MCF 10A (cell line): ENCODE measurements at regions of chr10 and their contacts with region 1.

Region 1: DNA sequence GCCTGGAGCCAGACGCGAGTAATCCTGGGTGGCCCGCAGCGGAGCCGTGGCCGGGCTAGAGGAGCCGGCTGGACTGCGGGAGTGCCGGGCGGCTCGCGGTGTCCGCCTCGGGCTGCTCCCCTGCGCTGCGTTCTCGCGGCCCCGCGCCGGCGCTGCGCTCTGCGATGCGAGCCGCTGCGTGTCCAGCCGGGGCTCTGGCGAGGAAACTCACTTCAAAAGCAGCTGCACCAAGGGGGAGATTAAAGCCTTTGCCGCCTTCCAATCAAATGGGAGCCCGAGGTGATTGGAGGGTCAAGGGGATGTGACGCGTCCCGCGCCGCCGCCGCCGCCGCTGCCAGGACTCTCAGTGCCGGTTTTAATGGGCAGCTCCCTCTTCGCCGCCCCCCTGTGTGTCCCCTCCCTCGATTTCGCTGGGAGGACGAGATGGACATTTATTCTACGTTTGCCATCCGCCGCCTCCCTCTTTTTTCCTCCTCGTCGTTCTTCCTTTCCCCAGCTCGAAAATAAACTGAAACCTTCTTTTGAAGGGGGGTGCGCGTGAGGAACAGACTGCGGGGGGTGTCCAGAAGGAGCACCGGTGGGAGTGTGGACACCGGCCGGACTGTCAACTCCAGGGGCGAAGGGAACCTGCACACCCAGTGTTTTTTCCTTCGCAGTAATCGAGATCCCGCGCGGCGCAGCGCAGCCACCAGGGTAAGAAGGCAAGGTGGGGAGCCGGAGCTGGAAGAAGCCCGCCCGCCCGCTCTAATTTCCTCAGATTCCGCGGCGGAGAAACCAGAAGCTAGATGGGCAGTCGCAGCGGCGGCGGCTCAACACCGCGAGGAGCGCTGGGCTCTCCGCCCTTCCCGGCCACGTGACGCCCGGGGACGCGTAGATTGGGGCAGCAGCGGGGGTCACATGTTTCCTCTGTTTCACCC is at the start of gene ZNF503:
- DNase-seq: peak; percentile 97
- H3K4me3 Mint-ChIP-seq: peak within 1 kb of the TSS; percentile 80
- H3K27ac Mint-ChIP-seq: peak within 1 kb of the TSS; percentile 51
- H3K4me1 Mint-ChIP-seq: peaks cover 5% of the 10 kb centered on the region
- H3K27me3 Mint-ChIP-seq: no peaks in the 10 kb centered on the region
- CTCF ChIP-seq: no peak
- total RNA-seq, gene ZNF503: 7.3 and 8.1 TPM in 2 replicates

Region 2: GRCh38 chr10:75294866-75295701 is 106.7 kb before region 1 on chr10:
- CTCF ChIA-PET with region 1: interaction called, 7 read pairs
- POLR2A ChIA-PET with region 1: interaction called, 29 read pairs
- intact Hi-C with region 1: loop called (anchors 1 kb)
- DNase-seq: peak; percentile 91
- H3K4me3 Mint-ChIP-seq: no peak overlapping the region
- H3K27ac Mint-ChIP-seq: no peak overlapping the region
- H3K4me1 Mint-ChIP-seq: no peaks in the 10 kb centered on the region
- H3K27me3 Mint-ChIP-seq: no peaks in the 10 kb centered on the region
- CTCF ChIP-seq: peak; percentile 23

Region 3: GRCh38 chr10:75469006-75469616 is 67.3 kb after region 1 on chr10:
- CTCF ChIA-PET with region 1: no interaction called
- POLR2A ChIA-PET with region 1: interaction called, 10 read pairs
- intact Hi-C with region 1: loop called (anchors 1 kb)
- DNase-seq: peak; percentile 97
- H3K4me3 Mint-ChIP-seq: peak overlapping the region; percentile 4
- H3K27ac Mint-ChIP-seq: peak overlapping the region; percentile 0
- H3K4me1 Mint-ChIP-seq: peaks cover 22% of the 10 kb centered on the region
- H3K27me3 Mint-ChIP-seq: no peaks in the 10 kb centered on the region
- CTCF ChIP-seq: no peak

Region 4: DNA sequence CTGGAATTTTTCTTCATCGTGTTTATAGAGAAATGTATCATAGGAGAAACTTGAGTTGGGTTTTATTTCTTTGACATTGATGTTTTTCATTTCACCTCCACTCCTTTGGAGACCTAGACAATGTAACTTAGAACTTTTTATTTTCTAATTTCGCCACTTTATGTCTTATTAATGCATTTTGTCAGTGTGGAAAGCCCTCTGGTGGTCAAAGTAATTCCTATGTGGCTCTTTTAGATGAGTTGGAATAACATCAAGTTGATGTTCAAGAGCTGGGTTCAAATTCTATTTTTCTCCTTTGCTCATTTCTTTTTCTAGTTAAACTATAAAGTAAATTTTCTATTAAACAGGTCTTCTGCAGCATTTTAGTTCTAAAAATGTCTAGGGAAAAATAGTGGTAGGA is 508.2 kb after region 1 on chr10:
- CTCF ChIA-PET with region 1: interaction called, 41 read pairs
- POLR2A ChIA-PET with region 1: interaction called, 10 read pairs
- intact Hi-C with region 1: loop called (anchors 1 kb)
- DNase-seq: peak; percentile 36
- H3K4me3 Mint-ChIP-seq: no peak overlapping the region
- H3K27ac Mint-ChIP-seq: no peak overlapping the region
- H3K4me1 Mint-ChIP-seq: peaks cover 4% of the 10 kb centered on the region
- H3K27me3 Mint-ChIP-seq: peaks cover 10% of the 10 kb centered on the region
- CTCF ChIP-seq: peak; percentile 40

Region 5: DNA sequence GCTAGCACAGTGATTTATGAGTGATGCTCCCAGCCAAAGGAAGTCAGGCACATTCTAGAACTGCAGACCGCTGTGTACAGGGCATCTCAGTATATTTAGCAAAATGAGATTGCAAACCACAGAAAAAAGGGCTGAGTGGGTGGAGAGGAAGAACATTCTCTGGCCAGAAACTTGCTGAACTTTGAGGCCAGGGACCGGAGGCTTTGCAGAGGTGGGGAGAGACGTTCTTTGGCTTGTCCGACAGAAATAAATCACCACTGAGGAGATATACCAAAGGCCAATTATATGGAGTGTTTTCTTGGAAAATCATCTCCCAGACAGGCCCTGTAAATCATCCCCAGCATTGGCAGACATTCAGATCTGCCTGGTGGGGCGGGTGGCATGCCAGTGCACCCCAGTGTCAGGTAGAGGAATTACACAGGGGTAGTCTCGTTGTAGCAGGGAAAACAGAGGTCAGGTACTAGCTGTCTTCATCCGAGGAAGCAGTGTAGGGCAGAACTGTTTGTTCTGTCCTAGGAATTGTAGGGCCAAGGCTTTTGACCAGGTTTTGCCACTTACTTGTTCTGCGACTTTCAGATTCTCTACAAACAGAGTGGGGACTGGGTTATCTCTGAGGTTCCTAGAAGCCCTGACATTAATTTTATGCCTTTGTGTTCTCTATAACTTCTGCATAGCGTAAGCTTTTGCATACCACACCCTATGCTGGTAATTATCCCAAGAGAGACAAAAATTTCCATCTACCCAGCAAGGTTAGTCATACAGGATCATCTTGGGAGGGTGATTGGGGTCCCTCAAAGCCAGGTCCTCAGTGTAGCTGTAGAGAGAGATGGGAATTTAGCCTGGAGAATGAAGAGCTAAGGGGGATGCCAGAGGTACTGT is 685.2 kb after region 1 on chr10:
- CTCF ChIA-PET with region 1: interaction called, 3 read pairs
- POLR2A ChIA-PET with region 1: interaction called, 5 read pairs
- intact Hi-C with region 1: loop called (anchors 2 kb)
- DNase-seq: peak; percentile 67
- H3K4me3 Mint-ChIP-seq: no peak overlapping the region
- H3K27ac Mint-ChIP-seq: no peak overlapping the region
- H3K4me1 Mint-ChIP-seq: peaks cover 18% of the 10 kb centered on the region
- H3K27me3 Mint-ChIP-seq: no peaks in the 10 kb centered on the region
- CTCF ChIP-seq: peak; percentile 59

Region 6: DNA sequence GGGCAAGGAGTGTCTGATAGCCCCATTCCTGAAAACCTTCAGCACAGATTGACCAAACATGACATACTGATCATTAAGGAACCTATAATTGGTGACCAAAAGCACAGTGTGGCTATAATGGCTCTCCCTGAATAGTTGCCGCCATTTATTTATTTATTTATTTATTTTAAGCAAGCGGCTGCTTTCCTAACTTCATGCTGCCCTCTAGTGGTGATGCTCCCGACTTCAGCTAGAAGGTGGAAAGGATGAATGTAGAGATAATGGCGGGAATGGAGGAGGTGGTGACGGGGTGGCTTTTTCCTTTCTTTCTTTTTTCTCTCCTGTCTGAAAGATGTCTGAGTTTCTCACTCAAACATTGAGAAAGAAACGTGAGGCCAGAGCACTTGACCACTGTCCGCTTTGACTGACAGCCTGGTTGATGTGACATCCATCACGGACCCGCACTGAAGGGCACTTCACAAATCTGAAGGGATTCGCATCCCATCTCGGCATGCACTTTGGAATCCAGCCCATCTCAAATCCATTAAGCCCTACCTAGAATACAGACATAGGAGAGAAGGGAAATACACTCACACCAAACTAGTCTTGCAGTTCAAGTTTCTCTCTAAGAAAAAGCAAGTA is 1145.6 kb after region 1 on chr10:
- CTCF ChIA-PET with region 1: interaction called, 7 read pairs
- POLR2A ChIA-PET with region 1: interaction called, 5 read pairs
- intact Hi-C with region 1: loop called (anchors 1 kb)
- DNase-seq: peak; percentile 84
- H3K4me3 Mint-ChIP-seq: no peak overlapping the region
- H3K27ac Mint-ChIP-seq: no peak overlapping the region
- H3K4me1 Mint-ChIP-seq: no peaks in the 10 kb centered on the region
- H3K27me3 Mint-ChIP-seq: no peaks in the 10 kb centered on the region
- CTCF ChIP-seq: peak; percentile 74